ENCODE measurements at regions of chr2 and their contacts with region 1.

Region 1: GRCh38 chr2:207473049-207473930 is 56.5 kb upstream of the CREB1 start:
- DNase-seq: peak; percentile 62
- ATAC-seq: peak; percentile 84 to 86

Region 2: DNA sequence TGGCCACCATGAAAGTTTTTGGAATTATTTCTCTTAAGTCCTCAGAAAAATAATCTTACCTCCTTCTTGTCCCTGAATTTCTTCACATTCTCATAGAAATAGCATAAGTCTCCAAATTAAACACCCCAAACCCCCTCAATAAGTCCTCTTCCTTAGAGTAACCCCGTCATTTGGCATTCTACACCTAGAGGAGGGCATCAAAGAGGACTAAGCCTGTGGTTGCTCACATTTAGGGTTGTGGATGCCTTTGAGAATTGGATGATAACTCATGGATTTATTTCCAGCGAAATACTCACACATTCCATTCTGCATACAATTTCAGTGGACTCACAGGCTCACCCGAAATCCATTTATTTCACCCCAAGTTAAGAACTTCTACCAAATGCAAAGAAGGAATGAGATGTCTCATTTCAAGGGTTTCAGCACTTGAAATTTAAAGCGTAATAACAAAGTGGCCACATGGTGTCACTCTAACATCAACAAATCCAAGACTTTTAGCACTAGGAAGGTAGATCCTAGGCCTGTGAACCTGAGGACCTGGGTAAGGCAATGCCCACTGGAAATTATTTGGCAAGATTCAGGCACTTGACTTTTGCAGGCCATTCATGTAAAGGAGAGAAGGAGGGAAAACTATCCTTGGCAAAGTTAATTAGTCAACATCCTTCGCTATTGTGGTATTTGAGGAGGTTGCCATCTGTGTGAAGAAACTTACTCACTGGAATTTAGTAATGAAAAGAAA is 779.7 kb before region 1 on chr2:
- intact Hi-C with region 1: loop called in 1 of 2 experiments (anchors 5 kb)
- DNase-seq: no peak
- ATAC-seq: peak; percentile 41 to 73

Region 3: DNA sequence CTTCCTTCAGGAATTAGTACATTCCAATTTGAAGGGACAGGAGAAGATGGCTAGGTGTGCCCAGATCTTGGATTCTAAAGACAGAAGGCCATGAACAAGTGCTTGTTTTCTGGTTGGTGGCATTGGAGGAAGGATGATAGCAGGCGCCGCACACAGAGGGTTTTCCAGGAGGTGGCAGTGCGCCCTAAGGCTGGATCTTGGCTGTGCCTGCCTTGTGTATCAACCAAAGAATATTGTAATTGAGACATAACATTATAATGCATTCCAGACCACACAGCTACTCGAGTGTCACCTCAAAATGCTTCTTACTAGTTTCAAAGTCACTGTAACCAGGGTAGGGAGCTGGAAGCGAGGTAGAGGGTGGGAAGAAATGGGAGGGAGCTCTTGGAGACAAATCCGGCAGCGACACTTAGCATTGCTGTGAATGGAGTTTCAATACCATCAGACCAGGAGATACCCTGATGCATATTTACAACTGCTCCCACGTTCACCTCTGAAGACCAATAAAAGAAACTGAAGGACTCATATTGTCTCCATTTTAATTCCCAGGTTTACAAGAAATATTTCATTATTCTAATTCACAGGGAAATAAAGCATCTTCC is 491.4 kb before region 1 on chr2:
- intact Hi-C with region 1: loop called (anchors 2 to 5 kb)
- DNase-seq: peak; percentile 77
- ATAC-seq: peak; percentile 90 to 94

Region 4: GRCh38 chr2:207166039-207166348 is 307.3 kb before region 1 on chr2:
- intact Hi-C with region 1: loop called (anchors 10 kb)
- DNase-seq: peak; percentile 98
- ATAC-seq: peak; percentile 94 to 96

Region 5: GRCh38 chr2:207334624-207335371 is 138.5 kb before region 1 on chr2:
- intact Hi-C with region 1: loop called in 1 of 2 experiments (anchors 2 kb)
- DNase-seq: peak; percentile 81
- ATAC-seq: peak; percentile 80 to 90

Region 6: DNA sequence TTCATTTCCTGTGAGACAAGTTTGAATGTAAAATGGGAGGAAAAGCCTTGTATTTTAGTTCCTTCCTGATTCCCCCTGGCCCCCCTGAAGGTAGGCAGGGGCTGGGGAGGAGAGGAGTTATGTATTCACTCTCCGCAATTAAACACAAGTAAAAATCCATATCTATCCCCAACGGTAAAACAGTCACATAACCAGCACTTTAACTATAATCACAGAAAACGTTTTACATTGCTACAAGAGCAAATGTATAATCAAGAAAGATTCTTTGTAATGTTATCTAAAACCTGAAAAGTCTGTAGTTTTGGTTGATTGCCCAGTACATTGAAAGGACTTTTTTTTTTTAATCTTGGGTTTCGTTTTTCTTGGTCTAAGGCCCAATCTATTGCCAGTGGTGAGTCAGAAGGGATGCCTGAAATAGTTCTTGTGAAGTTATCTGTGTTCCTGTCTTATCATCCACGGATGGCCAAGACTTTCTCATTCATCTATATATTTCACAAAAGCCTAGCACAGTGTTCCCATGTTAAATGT is 203.6 kb after region 1 on chr2:
- intact Hi-C with region 1: no loop called
- DNase-seq: no peak
- ATAC-seq: peak; percentile 68 to 94